ENCODE measurements at regions of chr7 and their contacts with region 1.

Region 1: GRCh38 chr7:129144834-129145668 is 544 bp downstream of the TSPAN33 start:
- H3K4me3 Mint-ChIP-seq: peak overlapping the region; percentile 85
- H3K27ac Mint-ChIP-seq: peak overlapping the region; percentile 70
- H3K4me1 Mint-ChIP-seq: peaks cover 61% of the 10 kb centered on the region
- H3K27me3 Mint-ChIP-seq: peaks cover 24% of the 10 kb centered on the region

Region 2: DNA sequence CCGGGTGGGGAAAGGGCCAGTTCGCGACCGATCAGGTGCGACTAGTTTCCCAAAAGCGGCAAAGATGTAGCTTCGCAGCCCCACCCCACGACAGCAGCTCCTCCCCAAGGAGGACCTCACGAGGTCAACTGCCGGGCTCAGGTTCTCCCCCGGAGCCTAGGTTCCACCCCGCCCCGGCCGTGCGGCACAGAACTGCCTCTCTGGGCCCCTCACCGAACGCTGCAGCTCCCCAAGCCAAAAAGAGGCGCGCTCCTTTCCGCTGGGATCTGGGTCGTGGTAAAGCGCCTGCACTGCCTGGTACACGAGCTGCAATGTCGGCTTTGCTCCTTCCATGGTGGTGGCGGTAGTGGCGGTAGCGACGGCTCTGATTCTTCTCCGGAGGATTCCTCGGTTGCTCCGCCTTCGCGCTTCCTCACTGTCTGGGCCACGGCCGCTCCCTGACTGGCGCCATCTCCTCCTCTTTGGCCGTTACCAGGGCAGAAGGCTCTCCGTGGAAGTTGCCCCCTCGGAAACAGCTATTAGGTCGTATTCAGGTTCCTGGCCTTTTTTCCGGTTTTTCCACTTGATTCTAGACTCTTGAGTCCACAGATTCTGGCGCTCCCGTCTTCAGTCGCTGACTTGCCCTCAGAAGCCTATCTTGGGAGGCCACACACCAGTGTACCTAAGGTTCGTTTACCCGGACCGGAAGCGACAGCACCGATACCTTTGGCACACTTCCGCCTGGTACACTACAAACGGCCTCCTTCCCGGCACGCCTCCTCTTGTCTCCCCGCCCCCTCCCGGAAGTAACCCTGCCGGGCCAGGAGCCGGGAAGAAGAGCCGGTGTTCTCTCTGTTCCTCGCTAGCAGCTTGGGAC is 90.4 kb before region 1 on chr7 and contains the start of gene TNPO3:
- intact Hi-C with region 1: loop called (anchors 5 kb)
- H3K4me3 Mint-ChIP-seq: peak within 1 kb of the TSS; percentile 86
- H3K27ac Mint-ChIP-seq: peak within 1 kb of the TSS; percentile 99
- H3K4me1 Mint-ChIP-seq: peaks cover 44% of the 10 kb centered on the region
- H3K27me3 Mint-ChIP-seq: peaks cover 3% of the 10 kb centered on the region

Region 3: GRCh38 chr7:129202058-129202777 is 57.2 kb after region 1 on chr7:
- intact Hi-C with region 1: no loop called
- H3K4me3 Mint-ChIP-seq: no peak overlapping the region
- H3K27ac Mint-ChIP-seq: peak overlapping the region; percentile 58
- H3K4me1 Mint-ChIP-seq: peaks cover 21% of the 10 kb centered on the region
- H3K27me3 Mint-ChIP-seq: no peaks in the 10 kb centered on the region